CD14-positive monocyte (primary cell): ENCODE measurements at regions of chr17 and their contacts with region 1.

Region 1: DNA sequence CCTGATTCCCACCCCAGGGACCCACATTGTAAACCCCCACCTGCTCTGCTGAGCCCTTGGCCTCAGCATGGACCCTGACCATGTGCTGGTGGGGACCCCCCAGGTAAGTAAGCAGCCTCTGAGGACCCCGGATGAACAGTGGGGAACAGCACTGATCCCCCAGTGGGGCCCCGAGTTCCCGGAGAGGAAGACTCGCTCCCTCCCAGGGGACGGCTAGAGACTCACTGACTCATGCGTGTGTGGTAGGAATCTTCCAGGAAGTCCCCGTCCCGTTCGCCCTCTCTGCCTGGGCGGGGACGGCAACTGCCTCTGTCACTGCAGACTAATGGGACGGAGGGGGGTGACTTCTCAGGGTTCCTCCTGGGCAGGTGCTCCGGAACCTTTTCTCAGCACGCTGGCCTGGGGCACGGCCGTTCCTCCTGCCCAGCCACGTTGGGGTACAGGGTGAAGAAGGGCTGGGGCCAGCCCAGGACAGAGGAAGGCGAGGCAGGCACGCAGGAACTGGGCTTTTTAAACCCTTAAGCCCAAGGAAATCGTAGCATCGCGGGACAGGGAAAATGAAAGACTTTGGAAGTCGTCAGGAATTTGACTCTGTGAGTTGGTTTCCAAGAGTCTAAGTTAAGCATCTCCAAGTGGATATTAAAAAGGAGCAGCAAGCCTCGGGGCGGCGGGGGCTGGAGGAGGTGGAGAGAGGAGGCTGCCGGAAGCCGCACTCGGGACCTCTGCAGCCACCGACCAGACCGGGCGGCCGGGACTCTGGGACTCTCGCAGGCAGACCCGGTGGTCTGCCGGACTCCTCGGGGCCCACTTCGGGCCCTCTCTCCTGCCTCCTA is 178.7 kb downstream of the SEC14L1 start:
- DNase-seq: peak; percentile 88 to 96 (median 96)
- H3K4me3 ChIP-seq: peak overlapping the region; percentile 47 to 77 (median 55)
- H3K4me3 Mint-ChIP-seq: peak overlapping the region; percentile 94
- H3K27ac ChIP-seq: peak overlapping the region; percentile 56 to 93
- H3K27ac Mint-ChIP-seq: peak overlapping the region; percentile 91 to 99 (median 95)
- H3K4me1 ChIP-seq: peaks cover 71 to 89% of the 10 kb centered on the region in 2 donors
- H3K4me1 Mint-ChIP-seq: peaks cover 79% of the 10 kb centered on the region
- H3K27me3 ChIP-seq: no peaks in the 10 kb centered on the region
- H3K27me3 Mint-ChIP-seq: peaks cover 0 to 2% (median 0%) of the 10 kb centered on the region in 3 donors
- CTCF ChIP-seq: no peak

Region 2: DNA sequence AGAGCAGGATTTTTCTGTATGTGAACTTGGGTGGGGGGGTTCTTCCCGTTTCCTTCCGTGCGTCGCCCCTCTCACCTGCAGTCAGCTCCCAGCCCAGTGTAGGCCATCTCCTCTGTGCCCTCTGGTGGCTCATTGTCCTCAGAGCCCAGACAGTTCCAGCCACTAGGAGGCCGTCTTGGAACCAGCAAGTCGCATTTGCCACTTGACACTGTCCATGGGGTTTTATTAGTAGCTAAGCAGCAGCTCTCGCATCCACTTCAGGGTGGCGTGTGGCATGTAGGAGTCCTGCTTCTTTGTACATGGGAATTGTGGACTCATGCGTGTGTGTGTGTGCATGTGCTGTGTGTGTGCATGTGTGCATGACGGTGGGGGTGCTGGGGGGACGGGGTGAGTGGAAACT is 104.7 kb before region 1 on chr17:
- intact Hi-C with region 1: no loop called
- DNase-seq: no peak
- H3K4me3 ChIP-seq: no peak overlapping the region
- H3K4me3 Mint-ChIP-seq: no peak overlapping the region
- H3K27ac ChIP-seq: no peak overlapping the region
- H3K27ac Mint-ChIP-seq: no peak overlapping the region
- H3K4me1 ChIP-seq: peaks cover 15 to 22% of the 10 kb centered on the region in 2 donors
- H3K4me1 Mint-ChIP-seq: peaks cover 18% of the 10 kb centered on the region
- H3K27me3 ChIP-seq: no peaks in the 10 kb centered on the region
- H3K27me3 Mint-ChIP-seq: peaks cover 0 to 2% (median 1%) of the 10 kb centered on the region in 3 donors
- CTCF ChIP-seq: no peak

Region 3: GRCh38 chr17:77280980-77281903 is 38.2 kb before region 1 on chr17:
- intact Hi-C with region 1: loop called (anchors 5 kb)
- DNase-seq: peak in 2 of 3 donors; percentile 32 to 50
- H3K4me3 ChIP-seq: peak overlapping the region; percentile 22 to 73 (median 39)
- H3K4me3 Mint-ChIP-seq: peak overlapping the region; percentile 68 to 86
- H3K27ac ChIP-seq: no peak overlapping the region
- H3K27ac Mint-ChIP-seq: no peak overlapping the region
- H3K4me1 ChIP-seq: peaks cover 46 to 51% of the 10 kb centered on the region in 2 donors
- H3K4me1 Mint-ChIP-seq: peaks cover 49% of the 10 kb centered on the region
- H3K27me3 ChIP-seq: peaks cover 10 to 36% of the 10 kb centered on the region in 2 donors
- H3K27me3 Mint-ChIP-seq: peaks cover 26 to 39% (median 31%) of the 10 kb centered on the region in 3 donors
- CTCF ChIP-seq: no peak

Region 4: DNA sequence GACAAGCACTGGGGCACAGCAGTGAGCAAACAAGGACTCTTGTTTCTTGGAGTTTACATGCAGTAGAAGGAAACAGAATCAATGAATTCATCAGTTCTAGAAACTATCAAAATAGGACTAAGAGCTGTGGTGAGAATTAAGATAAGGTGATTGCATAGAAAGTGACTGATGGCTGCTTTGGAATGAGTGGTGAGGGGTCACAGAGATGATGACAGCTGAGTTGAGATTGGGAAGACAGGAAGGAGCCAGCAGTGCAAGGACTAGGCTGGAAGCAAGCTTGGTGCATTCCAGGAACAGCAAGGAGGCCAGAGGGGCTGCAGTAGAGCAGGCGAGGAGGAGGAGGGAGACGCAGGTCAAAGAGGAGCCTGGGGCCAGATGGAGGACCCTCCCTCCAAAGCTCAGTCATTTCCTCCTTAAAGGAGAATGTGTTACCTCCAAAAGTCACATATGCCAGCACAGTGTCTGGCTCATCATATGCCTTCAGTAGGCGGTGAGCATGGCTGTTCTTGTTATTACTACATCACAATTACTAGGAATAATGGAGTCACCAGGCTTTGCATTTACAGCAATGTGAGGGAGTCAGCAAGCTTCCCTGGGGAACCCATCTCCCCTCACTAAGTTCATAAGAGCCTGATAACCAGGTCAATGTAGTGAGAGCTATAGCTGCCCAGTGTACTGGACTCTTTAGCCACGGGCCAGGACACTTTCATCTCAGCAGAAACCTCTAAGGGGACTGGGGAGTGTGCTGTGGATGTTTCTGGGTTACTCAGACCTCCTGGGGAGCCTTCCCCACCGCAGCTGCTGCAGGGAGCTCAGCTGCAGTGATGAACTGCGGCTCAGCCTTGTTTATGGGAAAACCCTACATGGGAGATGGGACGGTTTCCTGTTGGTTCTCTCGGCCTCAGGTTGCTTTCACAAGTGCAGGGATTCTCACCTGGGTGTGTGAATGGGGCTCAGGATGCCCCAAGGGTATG is 21.4 kb before region 1 on chr17:
- intact Hi-C with region 1: no loop called
- DNase-seq: no peak
- H3K4me3 ChIP-seq: no peak overlapping the region
- H3K4me3 Mint-ChIP-seq: no peak overlapping the region
- H3K27ac ChIP-seq: no peak overlapping the region
- H3K27ac Mint-ChIP-seq: no peak overlapping the region
- H3K4me1 ChIP-seq: peaks cover 7 to 11% of the 10 kb centered on the region in 2 donors
- H3K4me1 Mint-ChIP-seq: peaks cover 11% of the 10 kb centered on the region
- H3K27me3 ChIP-seq: no peaks in the 10 kb centered on the region
- H3K27me3 Mint-ChIP-seq: peaks cover 1 to 8% (median 3%) of the 10 kb centered on the region in 3 donors
- CTCF ChIP-seq: no peak

Region 5: GRCh38 chr17:77345260-77345910 is 26.0 kb after region 1 on chr17:
- intact Hi-C with region 1: no loop called
- DNase-seq: no peak
- H3K4me3 ChIP-seq: no peak overlapping the region
- H3K4me3 Mint-ChIP-seq: no peak overlapping the region
- H3K27ac ChIP-seq: no peak overlapping the region
- H3K27ac Mint-ChIP-seq: no peak overlapping the region
- H3K4me1 ChIP-seq: peaks cover 17 to 31% of the 10 kb centered on the region in 2 donors
- H3K4me1 Mint-ChIP-seq: peaks cover 35% of the 10 kb centered on the region
- H3K27me3 ChIP-seq: no peaks in the 10 kb centered on the region
- H3K27me3 Mint-ChIP-seq: no peaks in the 10 kb centered on the region
- CTCF ChIP-seq: no peak

Region 6: GRCh38 chr17:77404812-77405581 is 85.6 kb after region 1 on chr17:
- intact Hi-C with region 1: no loop called
- DNase-seq: peak; percentile 83 to 87 (median 87)
- H3K4me3 ChIP-seq: peak overlapping the region; percentile 13 to 79 (median 42)
- H3K4me3 Mint-ChIP-seq: peak overlapping the region; percentile 82 to 97
- H3K27ac ChIP-seq: peak overlapping the region; percentile 69 to 96
- H3K27ac Mint-ChIP-seq: peak overlapping the region; percentile 95 to 98 (median 97)
- H3K4me1 ChIP-seq: peaks cover 75 to 91% of the 10 kb centered on the region in 2 donors
- H3K4me1 Mint-ChIP-seq: peaks cover 86% of the 10 kb centered on the region
- H3K27me3 ChIP-seq: no peaks in the 10 kb centered on the region
- H3K27me3 Mint-ChIP-seq: peaks cover 3 to 8% (median 4%) of the 10 kb centered on the region in 3 donors
- CTCF ChIP-seq: no peak